Right ventricle myocardium inferior (tissue), 1 donor: ENCODE measurements at regions of chr6 and their contacts with region 1.

Region 1: DNA sequence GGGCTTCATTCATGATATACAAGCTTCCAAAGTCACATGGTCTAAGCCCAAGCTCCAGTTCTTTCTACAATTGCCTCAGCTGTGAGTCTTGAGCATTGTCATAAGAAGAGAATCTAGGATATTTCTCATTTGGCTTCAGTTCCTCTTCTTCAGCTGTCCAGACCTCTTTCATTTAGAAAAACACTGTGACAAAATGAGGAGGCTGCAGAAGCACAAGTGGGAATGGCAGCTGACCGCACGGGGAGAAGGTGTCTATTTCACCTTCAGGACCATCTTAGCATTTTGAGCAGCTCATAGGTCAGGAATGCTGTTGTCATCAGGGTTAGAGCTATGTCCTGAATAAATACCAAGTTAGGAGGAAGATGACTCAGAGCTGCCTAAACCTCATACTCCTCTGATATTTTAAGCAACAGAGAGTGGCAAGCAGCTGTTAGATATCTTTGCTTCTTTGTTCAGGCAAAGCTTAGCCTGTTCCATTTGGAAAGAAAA is 390.1 kb upstream of the CITED2 start:
- DNase-seq: no peak
- ATAC-seq: peak; percentile 94

Region 2: GRCh38 chr6:139597771-139598755 is 166.5 kb before region 1 on chr6:
- intact Hi-C with region 1: loop called (anchors 10 kb)
- DNase-seq: peak; percentile 83
- ATAC-seq: peak; percentile 85

Region 3: DNA sequence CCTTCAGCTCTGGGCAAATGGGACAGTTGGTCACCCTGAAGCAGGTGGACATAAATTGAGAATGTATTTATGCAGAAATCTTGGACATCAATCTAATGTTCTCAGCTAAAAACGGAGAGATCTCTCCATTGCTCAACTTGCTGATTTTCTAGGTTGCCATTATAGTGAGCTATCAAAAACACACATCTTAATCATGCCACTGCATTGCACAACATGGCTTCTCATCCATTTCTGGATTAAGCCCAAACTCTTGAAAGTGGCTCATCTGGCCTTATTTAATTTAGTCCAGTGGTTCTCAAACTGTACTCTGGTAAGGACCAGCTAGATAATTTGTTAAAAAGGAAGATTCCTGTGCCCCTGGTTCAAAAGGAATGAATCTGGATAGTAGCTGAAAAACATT is 65.2 kb before region 1 on chr6:
- intact Hi-C with region 1: no loop called
- DNase-seq: no peak
- ATAC-seq: peak; percentile 28

Region 4: DNA sequence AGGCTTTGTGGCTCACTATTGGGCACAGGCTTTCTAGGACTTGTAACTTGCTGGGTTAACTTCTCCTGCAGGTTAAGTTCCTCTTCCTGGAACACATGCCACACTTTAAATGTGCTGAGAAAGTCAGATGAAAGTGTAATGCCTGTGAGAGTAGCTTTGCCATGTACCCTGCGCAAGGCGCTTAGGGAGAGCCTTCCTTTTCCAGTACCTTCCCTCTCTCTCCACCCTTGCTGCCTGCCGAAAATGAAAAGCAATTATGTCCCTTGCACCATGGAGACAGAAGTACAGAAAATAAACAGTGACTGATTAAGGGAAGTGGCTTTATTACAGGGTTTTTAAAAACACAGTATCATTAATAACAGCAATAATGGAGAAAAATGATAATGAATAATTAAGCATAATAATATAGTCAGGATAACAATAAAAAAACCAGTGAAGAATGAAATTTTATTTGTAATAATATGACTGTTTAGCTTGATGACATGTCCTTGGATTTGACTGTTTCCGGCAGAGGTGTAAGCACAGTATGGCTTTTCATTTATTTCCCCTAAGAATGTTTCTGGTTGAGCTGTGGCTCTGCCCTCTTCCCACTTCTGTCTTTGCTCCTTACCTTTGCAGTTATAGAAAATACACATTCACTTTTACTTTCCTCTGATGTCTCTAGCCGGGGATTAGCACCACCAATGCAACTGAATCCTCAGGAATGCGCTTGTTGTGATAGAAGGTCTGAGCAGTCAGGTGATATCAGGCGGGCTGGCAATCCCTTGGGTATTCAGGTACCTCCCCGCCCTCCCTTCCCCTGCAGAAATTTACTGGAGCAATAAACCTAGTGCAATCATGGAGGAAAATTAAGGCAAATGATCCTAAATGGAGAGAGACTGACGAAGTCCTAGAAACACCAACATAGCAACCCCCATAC is 82.3 kb after region 1 on chr6:
- intact Hi-C with region 1: no loop called
- DNase-seq: no peak
- ATAC-seq: peak; percentile 89

Region 5: GRCh38 chr6:140062043-140063020 is 297.8 kb after region 1 on chr6:
- intact Hi-C with region 1: no loop called
- DNase-seq: peak; percentile 61
- ATAC-seq: peak; percentile 67